Activated CD4-positive, alpha-beta memory T cell treated with anti-CD3 and anti-CD28 coated beads for 36 hours (primary cell): ENCODE measurements at regions of chr9 and their contacts with region 1.

Region 1: DNA sequence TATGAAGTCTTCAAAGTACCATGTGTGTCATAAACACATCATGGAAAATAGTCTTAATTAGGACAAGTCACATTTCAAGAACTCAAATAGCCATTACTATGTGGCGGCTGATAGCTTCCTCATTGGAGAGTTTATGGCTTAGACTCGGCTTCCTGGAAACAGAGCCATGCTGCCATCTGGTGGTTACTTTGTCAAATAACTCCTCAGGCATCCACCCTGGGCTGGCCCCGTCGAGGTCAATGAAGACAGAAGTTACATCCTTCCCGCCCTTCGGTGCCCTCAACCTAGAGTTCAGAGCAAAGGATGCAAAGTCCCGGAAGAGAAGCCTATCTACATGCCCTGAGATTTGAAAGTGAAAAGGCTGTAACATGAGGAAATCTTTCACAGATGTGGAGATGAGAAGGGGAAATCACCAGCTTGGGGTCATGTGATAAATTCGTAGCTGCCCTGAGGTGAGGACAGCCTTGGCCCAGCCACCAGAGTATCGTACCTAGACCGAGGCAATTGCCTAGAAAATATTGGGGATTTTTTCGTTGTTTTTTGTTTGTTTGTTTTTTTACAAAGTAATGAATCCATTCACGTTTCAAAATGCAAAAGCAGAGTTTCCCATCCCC is 45.5 kb upstream of the ZNF169 start:
- DNase-seq: peak; percentile 82
- H3K4me3 Mint-ChIP-seq: no peak overlapping the region
- H3K27ac Mint-ChIP-seq: no peak overlapping the region
- H3K4me1 Mint-ChIP-seq: peaks cover 3% of the 10 kb centered on the region
- H3K27me3 Mint-ChIP-seq: peaks cover 17% of the 10 kb centered on the region

Region 2: GRCh38 chr9:93827545-93828330 is 385.9 kb before region 1 on chr9:
- CTCF ChIA-PET with region 1: no interaction called
- POLR2A ChIA-PET with region 1: no interaction called
- intact Hi-C with region 1: loop called (anchors 2 kb)
- DNase-seq: peak; percentile 54
- H3K4me3 Mint-ChIP-seq: no peak overlapping the region
- H3K27ac Mint-ChIP-seq: no peak overlapping the region
- H3K4me1 Mint-ChIP-seq: peaks cover 10% of the 10 kb centered on the region
- H3K27me3 Mint-ChIP-seq: peaks cover 27% of the 10 kb centered on the region

Region 3: GRCh38 chr9:94054716-94055115 is 158.9 kb before region 1 on chr9:
- CTCF ChIA-PET with region 1: interaction called, 291 read pairs
- POLR2A ChIA-PET with region 1: no interaction called
- intact Hi-C with region 1: no loop called
- DNase-seq: no peak
- H3K4me3 Mint-ChIP-seq: no peak overlapping the region
- H3K27ac Mint-ChIP-seq: no peak overlapping the region
- H3K4me1 Mint-ChIP-seq: no peaks in the 10 kb centered on the region
- H3K27me3 Mint-ChIP-seq: no peaks in the 10 kb centered on the region

Region 4: DNA sequence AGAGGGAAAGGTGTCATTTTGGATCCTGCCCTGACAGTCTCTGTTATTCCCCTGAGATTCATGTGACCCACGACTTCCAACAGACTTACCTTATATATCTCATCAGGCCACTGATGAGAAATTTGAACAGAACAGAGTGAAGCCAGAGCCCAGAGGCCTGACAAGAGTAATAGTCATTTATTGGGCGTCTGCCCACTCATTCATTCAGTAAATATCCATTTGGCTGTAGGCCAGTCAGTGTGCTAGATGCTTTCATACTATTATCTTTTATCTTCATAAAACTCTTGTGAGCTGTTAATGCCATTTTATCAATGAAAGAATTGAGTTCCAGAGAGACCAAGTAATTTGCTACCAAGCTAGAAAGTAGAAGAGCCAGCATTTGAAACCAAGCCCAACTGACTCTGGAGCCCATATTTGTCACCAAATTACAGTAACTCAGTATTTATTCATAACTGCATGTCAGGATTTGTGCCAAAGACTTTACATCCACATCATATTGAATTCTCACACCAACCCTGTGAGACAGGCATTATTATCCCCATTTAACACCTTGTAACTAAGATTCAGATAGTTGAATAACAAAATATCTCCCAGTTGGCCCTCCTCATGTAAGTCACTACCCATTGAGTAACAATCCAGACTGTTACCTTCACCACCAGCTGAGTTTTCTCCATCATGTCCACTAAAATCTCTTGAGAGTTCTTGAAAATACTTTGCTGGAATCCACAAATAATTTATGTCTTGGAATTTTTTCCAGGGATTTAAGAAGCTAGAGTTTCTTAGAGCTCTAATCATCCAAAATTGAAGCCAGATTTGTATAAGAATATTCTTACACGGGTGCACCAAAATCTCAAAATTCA is 126.9 kb before region 1 on chr9:
- CTCF ChIA-PET with region 1: interaction called, 11 read pairs
- POLR2A ChIA-PET with region 1: no interaction called
- intact Hi-C with region 1: no loop called
- DNase-seq: no peak
- H3K4me3 Mint-ChIP-seq: no peak overlapping the region
- H3K27ac Mint-ChIP-seq: no peak overlapping the region
- H3K4me1 Mint-ChIP-seq: no peaks in the 10 kb centered on the region
- H3K27me3 Mint-ChIP-seq: no peaks in the 10 kb centered on the region

Region 5: DNA sequence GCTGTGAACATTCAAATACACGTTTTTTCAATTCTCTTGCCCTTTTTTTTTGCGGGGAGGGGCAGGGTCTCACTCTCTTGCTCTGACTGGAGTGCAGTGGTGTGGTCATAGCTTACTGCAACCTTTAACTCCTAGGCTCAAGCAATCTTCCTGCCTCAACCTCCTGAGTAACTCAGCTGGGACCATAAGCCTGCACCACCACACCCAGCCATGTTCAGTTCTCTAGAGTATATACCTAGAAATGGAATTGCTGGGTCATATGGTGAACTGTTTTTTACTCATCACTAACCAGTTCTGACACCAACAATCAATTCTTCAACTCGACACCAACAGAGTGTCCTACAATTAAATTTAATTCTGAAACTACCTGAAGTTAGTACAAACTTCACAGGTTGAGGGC is 40.0 kb before region 1 on chr9:
- CTCF ChIA-PET with region 1: interaction called, 17 read pairs
- POLR2A ChIA-PET with region 1: no interaction called
- intact Hi-C with region 1: loop called (anchors 5 kb)
- DNase-seq: peak; percentile 74
- H3K4me3 Mint-ChIP-seq: peak overlapping the region; percentile 49
- H3K27ac Mint-ChIP-seq: peak overlapping the region; percentile 89
- H3K4me1 Mint-ChIP-seq: peaks cover 84% of the 10 kb centered on the region
- H3K27me3 Mint-ChIP-seq: no peaks in the 10 kb centered on the region